ENCODE measurements at regions of chr3 and their contacts with region 1.

Region 1: GRCh38 chr3:72426618-72427397 is 421.4 kb downstream of the SHQ1 start:
- DNase-seq: no peak
- H3K4me3 Mint-ChIP-seq: peak overlapping the region; percentile 67
- H3K27ac Mint-ChIP-seq: peak overlapping the region; percentile 96
- H3K4me1 Mint-ChIP-seq: peaks cover 71% of the 10 kb centered on the region
- H3K27me3 Mint-ChIP-seq: no peaks in the 10 kb centered on the region

Region 2: DNA sequence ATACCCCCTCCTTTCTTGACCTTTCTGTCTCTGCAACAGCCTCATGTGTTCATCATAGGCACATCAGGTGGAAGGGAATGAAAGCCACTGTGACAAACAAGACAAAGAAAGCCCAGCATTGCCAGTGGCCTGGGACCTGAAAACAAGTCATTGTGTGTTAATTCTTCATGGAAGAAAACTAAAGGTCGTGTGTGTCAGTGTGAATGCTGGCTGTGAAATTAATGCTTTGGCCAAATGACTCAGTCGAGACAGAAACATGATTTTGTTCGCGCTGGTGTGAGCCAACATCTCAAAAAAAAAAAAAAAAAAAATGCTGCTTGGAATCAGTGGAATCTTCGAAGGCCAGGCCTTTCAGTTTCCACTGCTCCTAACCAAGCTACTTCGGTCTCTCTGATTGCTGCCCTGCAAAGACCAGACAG is 255.3 kb before region 1 on chr3:
- intact Hi-C with region 1: no loop called
- DNase-seq: no peak
- H3K4me3 Mint-ChIP-seq: no peak overlapping the region
- H3K27ac Mint-ChIP-seq: no peak overlapping the region
- H3K4me1 Mint-ChIP-seq: peaks cover 2% of the 10 kb centered on the region
- H3K27me3 Mint-ChIP-seq: peaks cover 45% of the 10 kb centered on the region

Region 3: GRCh38 chr3:72193771-72194463 is 232.9 kb before region 1 on chr3:
- intact Hi-C with region 1: no loop called
- DNase-seq: no peak
- H3K4me3 Mint-ChIP-seq: no peak overlapping the region
- H3K27ac Mint-ChIP-seq: no peak overlapping the region
- H3K4me1 Mint-ChIP-seq: peaks cover 7% of the 10 kb centered on the region
- H3K27me3 Mint-ChIP-seq: no peaks in the 10 kb centered on the region

Region 4: DNA sequence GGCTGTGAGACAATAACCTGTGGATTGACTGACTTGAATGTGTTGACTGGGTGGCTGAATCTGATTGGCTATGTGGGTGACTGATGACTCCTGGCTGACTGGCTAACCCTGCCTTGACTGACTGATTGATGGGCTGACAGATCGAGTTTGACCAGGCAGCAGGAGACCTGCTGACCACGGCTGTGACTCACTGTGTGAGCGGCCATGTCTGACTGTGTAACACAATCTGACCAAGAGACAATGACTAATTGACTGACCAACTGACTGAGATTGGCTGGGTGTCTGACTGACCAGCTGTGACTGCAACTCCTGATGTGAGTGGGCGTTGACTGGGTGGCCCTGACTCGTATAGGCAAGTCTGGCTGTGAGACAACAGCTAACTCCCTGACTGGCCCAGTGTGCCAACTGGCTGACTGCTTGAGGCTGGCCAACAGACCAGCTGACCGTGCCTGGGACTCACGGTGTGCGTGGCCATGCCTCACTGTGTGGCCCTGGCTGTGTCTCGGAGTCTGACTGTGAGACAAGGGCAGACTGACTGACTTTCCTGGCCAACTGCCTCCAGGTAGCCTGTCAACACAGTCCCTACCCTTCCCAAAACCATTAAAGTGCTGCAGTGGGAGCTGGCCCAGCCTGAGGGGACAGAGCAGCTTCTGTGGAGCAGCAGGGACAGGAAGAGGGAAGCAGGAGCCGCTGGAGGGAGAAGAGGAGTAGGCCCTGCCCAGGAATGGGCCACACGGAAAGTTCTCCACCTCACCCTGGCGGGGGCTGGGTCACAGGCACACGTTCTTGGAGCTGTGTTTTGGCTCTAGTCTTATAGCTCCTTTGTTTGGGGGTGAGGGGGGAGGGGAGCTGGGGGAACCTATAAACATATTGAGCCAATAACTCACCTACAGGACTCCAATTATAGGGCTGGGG is 87.4 kb before region 1 on chr3:
- intact Hi-C with region 1: loop called (anchors 2 kb)
- DNase-seq: no peak
- H3K4me3 Mint-ChIP-seq: no peak overlapping the region
- H3K27ac Mint-ChIP-seq: no peak overlapping the region
- H3K4me1 Mint-ChIP-seq: peaks cover 29% of the 10 kb centered on the region
- H3K27me3 Mint-ChIP-seq: no peaks in the 10 kb centered on the region

Region 5: GRCh38 chr3:72368331-72368975 is 58.4 kb before region 1 on chr3:
- intact Hi-C with region 1: no loop called
- DNase-seq: no peak
- H3K4me3 Mint-ChIP-seq: no peak overlapping the region
- H3K27ac Mint-ChIP-seq: no peak overlapping the region
- H3K4me1 Mint-ChIP-seq: peaks cover 15% of the 10 kb centered on the region
- H3K27me3 Mint-ChIP-seq: no peaks in the 10 kb centered on the region

Region 6: DNA sequence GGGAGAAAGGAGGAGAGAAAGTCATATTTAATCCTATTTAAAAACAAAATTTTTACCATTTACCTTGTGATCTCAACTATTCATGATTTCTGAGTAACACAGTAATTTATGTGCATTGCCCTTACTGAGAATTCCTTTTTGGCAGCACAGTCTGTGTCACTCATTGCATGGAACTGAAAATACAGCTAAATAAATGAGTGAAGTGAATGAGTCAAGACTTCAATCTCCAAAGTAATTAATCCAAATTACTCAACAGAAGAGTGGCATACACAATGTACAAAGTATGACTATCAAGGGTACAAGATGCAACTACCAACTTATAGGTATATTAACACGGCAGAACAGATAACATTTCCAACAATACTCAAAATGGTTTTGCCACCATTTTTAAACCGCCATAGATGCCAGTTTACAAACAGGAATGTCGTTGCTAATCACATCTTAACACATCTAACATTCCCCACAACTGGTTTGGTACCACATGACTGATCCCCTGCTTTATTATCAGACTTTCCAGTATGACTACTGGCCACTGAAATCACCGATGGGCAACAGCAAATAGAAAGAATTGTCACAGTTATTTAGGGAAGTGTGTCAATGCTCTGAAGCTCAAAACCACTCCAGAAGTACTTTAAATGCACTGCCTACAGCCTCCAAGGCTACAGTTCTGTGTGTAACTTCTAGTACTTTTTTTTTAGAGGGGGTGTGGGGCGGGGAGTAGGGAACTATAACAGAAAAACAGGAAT is 11.0 kb after region 1 on chr3:
- intact Hi-C with region 1: loop called (anchors 1 kb)
- DNase-seq: no peak
- H3K4me3 Mint-ChIP-seq: peak overlapping the region; percentile 60
- H3K27ac Mint-ChIP-seq: peak overlapping the region; percentile 86
- H3K4me1 Mint-ChIP-seq: peaks cover 76% of the 10 kb centered on the region
- H3K27me3 Mint-ChIP-seq: no peaks in the 10 kb centered on the region

Region 7: DNA sequence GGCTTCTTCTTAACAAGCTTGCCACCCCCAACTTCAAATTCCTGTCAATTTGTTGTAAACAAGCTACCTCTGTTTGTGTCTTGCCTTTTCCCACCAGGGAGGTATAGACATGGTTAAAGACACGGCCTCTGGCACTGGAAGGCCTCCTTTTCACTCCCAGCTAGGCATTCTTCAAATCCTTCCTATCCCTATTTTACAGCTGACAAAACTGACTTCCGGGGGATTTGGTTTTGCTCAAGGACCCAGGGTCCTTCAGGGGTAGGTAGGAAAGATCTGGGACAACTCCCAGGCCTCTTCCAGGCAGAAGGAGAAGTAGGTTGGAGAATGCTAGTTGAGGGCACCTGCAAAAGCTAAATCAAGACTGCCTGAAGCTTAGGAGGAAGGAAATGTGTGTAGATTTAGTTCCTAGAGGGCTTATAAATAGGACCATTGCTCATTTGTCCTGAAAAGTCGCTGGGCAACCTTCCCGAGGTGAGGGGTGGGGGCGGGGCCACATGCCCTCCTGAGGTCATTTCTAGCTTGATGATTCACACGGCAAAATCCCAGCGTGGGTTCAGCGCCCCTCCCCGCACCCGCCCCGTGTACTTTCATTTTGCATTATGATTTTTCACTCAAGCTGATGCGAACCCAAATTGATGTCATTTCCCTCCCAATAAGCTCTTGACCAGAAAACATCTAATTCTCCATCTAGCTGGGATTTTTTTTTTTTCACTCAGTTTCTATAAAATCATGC is 55.9 kb after region 1 on chr3:
- intact Hi-C with region 1: loop called (anchors 2 kb)
- DNase-seq: peak; percentile 63
- H3K4me3 Mint-ChIP-seq: peak overlapping the region; percentile 61
- H3K27ac Mint-ChIP-seq: peak overlapping the region; percentile 90
- H3K4me1 Mint-ChIP-seq: peaks cover 76% of the 10 kb centered on the region
- H3K27me3 Mint-ChIP-seq: no peaks in the 10 kb centered on the region

Region 8: GRCh38 chr3:72756900-72757299 is 330.1 kb after region 1 on chr3:
- intact Hi-C with region 1: loop called (anchors 5 kb)
- DNase-seq: peak; percentile 53
- H3K4me3 Mint-ChIP-seq: no peak overlapping the region
- H3K27ac Mint-ChIP-seq: peak overlapping the region; percentile 45
- H3K4me1 Mint-ChIP-seq: peaks cover 34% of the 10 kb centered on the region
- H3K27me3 Mint-ChIP-seq: no peaks in the 10 kb centered on the region